ENCODE measurements at regions of chr5 and their contacts with region 1.

Region 1: GRCh38 chr5:113513384-113514288 is at the start of gene YTHDC2:
- DNase-seq: peak; percentile 96
- H3K4me3 Mint-ChIP-seq: peak within 1 kb of the TSS; percentile 87
- H3K27ac Mint-ChIP-seq: peak within 1 kb of the TSS; percentile 85
- H3K4me1 Mint-ChIP-seq: peaks cover 22% of the 10 kb centered on the region
- H3K27me3 Mint-ChIP-seq: peaks cover 16% of the 10 kb centered on the region
- total RNA-seq, gene YTHDC2: 26.0 and 26.3 TPM in 2 replicates

Region 2: DNA sequence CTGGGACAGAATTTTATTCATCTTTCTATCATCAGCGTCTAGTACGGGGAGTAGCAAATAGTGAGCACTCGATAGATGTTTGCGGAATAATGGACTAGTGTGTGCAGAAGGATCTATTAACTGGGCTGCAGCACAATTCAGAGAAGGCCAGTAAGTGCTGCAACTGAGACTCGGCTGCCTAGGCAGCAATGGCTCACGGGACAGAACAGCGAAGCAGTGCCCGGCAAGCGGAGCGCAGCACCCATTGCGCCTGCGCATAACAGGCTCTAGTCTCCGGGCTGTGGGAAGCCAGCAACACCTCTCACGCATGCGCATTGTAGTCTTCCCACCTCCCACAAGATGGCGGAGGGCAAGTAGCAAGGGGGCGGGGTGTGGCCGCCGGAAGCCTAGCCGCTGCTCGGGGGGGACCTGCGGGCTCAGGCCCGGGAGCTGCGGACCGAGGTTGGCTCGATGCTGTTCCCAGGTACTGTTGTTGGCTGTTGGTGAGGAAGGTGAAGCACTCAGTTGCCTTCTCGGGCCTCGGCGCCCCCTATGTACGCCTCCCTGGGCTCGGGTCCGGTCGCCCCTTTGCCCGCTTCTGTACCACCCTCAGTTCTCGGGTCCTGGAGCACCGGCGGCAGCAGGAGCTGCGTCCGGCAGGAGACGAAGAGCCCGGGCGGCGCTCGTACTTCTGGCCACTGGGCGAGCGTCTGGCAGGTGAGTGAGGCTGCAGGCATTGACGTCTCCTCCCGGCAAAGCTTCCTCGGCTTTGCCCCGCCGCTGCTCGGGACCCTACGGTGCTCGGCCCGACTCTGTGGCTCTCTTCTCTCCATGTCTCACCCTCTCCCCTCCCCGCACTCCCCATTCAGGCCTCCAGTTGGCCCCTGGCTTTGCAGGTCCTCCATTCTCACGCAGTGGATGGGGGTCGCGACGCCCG is 806.2 kb before region 1 on chr5:
- intact Hi-C with region 1: loop called (anchors 5 kb)
- DNase-seq: peak; percentile 99
- H3K4me3 Mint-ChIP-seq: peak overlapping the region; percentile 96
- H3K27ac Mint-ChIP-seq: peak overlapping the region; percentile 86
- H3K4me1 Mint-ChIP-seq: peaks cover 38% of the 10 kb centered on the region
- H3K27me3 Mint-ChIP-seq: peaks cover 8% of the 10 kb centered on the region

Region 3: DNA sequence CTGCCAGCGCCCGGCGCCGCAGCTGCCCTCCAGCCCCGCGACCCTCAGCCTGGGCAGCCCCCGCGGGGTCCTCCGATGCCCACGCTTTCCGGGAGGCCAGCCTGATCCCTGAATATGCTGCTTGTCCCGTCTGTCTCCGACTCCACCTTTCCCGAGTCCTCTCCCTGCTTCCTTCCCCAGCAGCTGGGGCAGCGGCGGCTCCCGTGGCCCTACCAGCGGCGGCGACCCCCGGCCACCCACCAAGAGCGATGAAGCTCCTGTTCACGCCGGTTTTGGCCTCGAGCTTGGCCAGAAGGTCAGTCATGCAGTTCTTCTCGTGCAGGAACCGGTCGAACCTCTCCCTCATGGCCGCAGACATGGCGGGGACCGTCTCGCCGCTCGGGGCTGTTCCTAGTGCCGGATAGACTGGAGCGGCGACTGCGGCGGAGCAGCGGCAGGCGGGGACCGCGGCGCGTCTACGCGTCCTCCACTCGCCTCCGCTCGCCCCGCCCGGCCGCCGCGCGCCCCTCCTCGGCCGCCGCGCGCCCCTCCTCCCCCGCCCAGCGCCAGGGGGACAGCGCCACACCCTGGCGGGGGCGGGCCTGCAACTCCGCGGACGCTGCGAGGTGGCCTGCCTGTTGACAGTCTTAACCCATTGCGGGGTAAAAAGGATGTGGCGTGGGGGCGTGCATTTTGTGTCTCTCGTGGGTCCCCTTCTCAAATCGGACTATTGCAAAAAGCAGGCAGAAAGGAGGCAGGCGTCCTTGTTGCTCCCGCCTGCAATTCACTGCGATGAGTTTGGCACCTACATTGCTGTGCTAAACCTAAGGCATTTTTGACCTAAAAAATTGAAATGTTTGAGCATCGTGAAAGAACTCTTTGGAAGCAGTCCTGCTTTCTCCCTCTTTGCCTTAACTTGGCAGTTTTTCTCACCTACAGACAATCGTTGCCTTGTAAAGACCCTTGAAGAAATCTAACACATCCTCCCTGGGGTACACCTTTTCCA is 591.5 kb before region 1 on chr5 and contains the start of gene REEP5:
- intact Hi-C with region 1: loop called (anchors 2 kb)
- DNase-seq: peak; percentile 96
- H3K4me3 Mint-ChIP-seq: peak within 1 kb of the TSS; percentile 99
- H3K27ac Mint-ChIP-seq: peak within 1 kb of the TSS; percentile 93
- H3K4me1 Mint-ChIP-seq: peaks cover 58% of the 10 kb centered on the region
- H3K27me3 Mint-ChIP-seq: no peaks in the 10 kb centered on the region
- total RNA-seq, gene REEP5: 74.4 and 75.3 TPM in 2 replicates

Region 4: GRCh38 chr5:112995764-112996618 is 517.6 kb before region 1 on chr5:
- intact Hi-C with region 1: loop called (anchors 2 kb)
- DNase-seq: peak; percentile 94
- H3K4me3 Mint-ChIP-seq: no peak overlapping the region
- H3K27ac Mint-ChIP-seq: no peak overlapping the region
- H3K4me1 Mint-ChIP-seq: peaks cover 9% of the 10 kb centered on the region
- H3K27me3 Mint-ChIP-seq: no peaks in the 10 kb centered on the region

Region 5: GRCh38 chr5:113330533-113331208 is 183.0 kb before region 1 on chr5:
- intact Hi-C with region 1: loop called (anchors 1 kb)
- DNase-seq: peak; percentile 74
- H3K4me3 Mint-ChIP-seq: no peak overlapping the region
- H3K27ac Mint-ChIP-seq: no peak overlapping the region
- H3K4me1 Mint-ChIP-seq: peaks cover 14% of the 10 kb centered on the region
- H3K27me3 Mint-ChIP-seq: peaks cover 9% of the 10 kb centered on the region

Region 6: DNA sequence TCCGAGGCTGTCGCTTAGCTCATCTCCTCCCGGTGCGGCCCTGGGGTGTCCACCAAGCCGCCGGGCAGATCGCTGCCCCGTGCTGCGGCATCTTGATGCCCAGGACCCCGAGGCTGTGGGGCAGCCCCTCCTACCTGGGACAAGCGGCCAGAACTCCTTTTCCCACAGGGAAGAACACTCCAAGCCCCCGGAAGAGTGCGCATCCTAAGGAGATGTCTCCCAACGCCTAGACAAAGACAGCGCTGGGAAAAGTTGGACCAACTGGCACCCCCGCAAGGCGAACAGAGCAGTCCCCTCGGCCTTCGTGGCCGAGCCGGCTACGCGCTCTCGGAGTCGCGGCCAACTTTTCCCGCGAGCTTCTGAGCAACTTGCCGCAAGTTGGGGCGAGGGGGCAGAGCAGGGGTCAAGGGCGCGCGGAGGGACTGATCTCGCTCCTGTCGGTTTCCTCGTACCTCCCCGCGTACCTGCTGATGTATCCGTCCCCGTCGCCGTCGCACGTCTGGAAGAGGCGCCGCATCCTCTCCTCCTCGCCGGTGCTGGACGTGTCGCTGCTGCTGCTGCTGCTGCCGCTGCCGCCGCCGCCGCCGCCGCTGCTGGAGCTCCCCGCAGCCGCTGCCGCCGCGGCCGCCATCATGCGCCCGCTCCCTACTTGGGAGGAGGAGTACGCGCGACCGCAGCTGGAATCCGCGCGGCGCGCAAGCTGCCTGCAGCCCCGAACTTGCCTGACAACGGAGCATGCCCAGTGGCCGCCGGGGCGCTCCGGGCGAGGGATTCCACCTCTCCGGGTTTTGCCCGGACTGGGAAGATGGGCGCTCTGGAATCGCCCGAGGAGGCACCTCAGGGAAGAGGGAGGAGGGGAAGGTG is 25.6 kb before region 1 on chr5 and contains the start of gene MCC:
- intact Hi-C with region 1: loop called (anchors 2 kb)
- DNase-seq: peak; percentile 77
- H3K4me3 Mint-ChIP-seq: peak within 1 kb of the TSS; percentile 85
- H3K27ac Mint-ChIP-seq: no peak within 1 kb of the TSS
- H3K4me1 Mint-ChIP-seq: peaks cover 16% of the 10 kb centered on the region
- H3K27me3 Mint-ChIP-seq: peaks cover 75% of the 10 kb centered on the region
- total RNA-seq, gene MCC: 1.0 and 1.1 TPM in 2 replicates

Region 7: GRCh38 chr5:113606298-113607134 is 92.9 kb after region 1 on chr5:
- intact Hi-C with region 1: no loop called
- DNase-seq: peak; percentile 86
- H3K4me3 Mint-ChIP-seq: no peak overlapping the region
- H3K27ac Mint-ChIP-seq: no peak overlapping the region
- H3K4me1 Mint-ChIP-seq: peaks cover 6% of the 10 kb centered on the region
- H3K27me3 Mint-ChIP-seq: peaks cover 32% of the 10 kb centered on the region

Measured in activated CD4-positive, alpha-beta T cell treated with anti-CD3 and anti-CD28 coated beads, Interleukin-2, amount 10 ng/mL, durations not matched to agents 24 days and 14 days (primary cell).